Endothelial cell of umbilical vein (primary cell): ENCODE measurements at regions of chr19 and their contacts with region 1.

Region 1: GRCh38 chr19:27966390-27966816 is 1246.5 kb downstream of the UQCRFS1 start:
- DNase-seq: no peak
- H3K4me3 ChIP-seq: no peak overlapping the region
- H3K27ac ChIP-seq: no peak overlapping the region
- H3K4me1 ChIP-seq: no peaks in the 10 kb centered on the region
- H3K27me3 ChIP-seq: no peaks in the 10 kb centered on the region
- CTCF ChIP-seq: peak; percentile 23 to 41
- POLR2A ChIP-seq: no peak

Region 2: DNA sequence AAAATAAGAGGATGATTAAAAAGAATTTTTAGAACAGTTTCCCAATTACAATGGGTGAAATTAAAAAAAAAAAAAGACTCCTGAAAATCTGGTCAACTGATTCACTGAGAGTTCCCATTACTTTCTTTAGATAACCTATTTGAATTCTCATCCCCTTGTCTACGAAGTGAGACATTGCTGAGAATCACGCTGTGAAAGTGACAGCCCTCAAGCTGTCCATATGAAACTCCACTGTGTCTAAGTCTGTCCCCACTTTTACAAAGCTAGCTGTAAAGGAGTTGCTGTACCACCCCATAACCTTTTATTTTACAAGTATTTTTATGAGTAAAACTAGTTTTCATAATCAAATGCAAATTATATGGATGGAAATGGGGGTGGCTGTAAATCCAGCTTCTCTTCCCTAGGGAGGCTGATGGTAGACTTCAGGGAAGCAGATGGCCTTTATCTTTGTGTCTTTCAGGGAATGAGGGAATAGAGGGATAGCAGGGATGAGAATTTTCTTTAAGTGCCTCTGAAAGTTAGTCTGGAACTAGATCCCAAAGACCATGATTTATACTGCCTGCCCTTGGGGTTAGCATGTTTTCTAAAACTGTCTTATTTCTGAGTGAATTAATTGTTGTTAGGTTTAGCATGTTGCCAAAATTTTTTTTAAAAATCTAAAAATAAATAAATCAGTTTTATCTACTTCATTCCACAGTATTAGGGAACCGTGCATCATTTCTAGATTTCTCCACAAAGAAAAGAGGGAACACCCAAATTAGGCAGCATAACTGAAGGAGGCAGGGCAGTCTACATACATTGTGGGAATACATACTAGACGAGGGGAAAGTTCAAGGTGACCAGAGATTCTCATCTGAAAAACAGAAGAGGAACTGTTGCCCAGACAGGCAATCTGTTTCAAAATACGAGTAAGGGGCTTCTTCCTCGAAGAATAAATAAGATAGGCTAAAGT is 27.5 kb after region 1 on chr19:
- CTCF ChIA-PET with region 1: no interaction called
- POLR2A ChIA-PET with region 1: no interaction called
- dilution Hi-C with region 1: no loop called
- intact Hi-C with region 1: no loop called
- DNase-seq: no peak
- H3K4me3 ChIP-seq: no peak overlapping the region
- H3K27ac ChIP-seq: no peak overlapping the region
- H3K4me1 ChIP-seq: no peaks in the 10 kb centered on the region
- H3K27me3 ChIP-seq: no peaks in the 10 kb centered on the region
- CTCF ChIP-seq: no peak
- POLR2A ChIP-seq: no peak

Region 3: DNA sequence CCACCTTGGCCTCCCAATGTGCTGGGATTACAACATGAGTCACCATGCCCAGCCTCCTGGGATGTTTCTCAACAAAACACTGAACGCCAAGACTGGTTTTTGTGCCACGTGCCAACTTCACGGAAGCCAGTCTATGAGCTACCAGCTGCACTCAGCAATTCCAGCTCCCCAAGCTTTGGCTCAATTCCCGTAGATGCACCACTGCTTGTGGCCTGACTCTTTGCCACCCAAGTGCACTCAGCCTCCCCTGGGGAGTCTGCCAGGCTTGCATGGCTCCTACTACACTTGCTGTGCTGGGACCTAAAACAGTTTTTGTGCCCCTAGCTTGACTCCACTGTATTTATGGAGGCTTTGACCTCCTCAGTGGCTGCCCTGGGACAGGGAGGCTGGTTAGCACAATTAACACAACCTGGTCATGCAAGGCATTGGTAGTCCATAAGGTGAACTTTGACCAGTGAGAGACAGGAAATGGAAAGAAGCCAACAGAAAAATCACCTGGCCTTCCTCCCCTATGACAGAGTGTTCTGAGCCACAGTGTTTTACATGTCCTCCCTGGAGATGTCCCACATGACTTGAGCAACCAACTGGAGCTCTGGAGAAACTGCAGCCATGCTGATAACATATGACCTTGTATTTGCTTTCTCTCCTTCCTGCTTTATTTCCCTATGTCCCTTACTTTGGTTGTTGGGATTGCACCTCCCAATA is 73.4 kb after region 1 on chr19:
- CTCF ChIA-PET with region 1: no interaction called
- POLR2A ChIA-PET with region 1: no interaction called
- dilution Hi-C with region 1: no loop called
- intact Hi-C with region 1: no loop called
- DNase-seq: no peak
- H3K4me3 ChIP-seq: no peak overlapping the region
- H3K27ac ChIP-seq: no peak overlapping the region
- H3K4me1 ChIP-seq: no peaks in the 10 kb centered on the region
- H3K27me3 ChIP-seq: no peaks in the 10 kb centered on the region
- CTCF ChIP-seq: no peak
- POLR2A ChIP-seq: no peak

Region 4: GRCh38 chr19:28710278-28710677 is 743.9 kb after region 1 on chr19:
- CTCF ChIA-PET with region 1: no interaction called
- POLR2A ChIA-PET with region 1: no interaction called
- dilution Hi-C with region 1: no loop called
- intact Hi-C with region 1: loop called (anchors 1 kb)
- DNase-seq: peak; percentile 54
- H3K4me3 ChIP-seq: no peak overlapping the region
- H3K27ac ChIP-seq: no peak overlapping the region
- H3K4me1 ChIP-seq: no peaks in the 10 kb centered on the region
- H3K27me3 ChIP-seq: no peaks in the 10 kb centered on the region
- CTCF ChIP-seq: peak; percentile 32 to 44
- POLR2A ChIP-seq: no peak

Region 5: DNA sequence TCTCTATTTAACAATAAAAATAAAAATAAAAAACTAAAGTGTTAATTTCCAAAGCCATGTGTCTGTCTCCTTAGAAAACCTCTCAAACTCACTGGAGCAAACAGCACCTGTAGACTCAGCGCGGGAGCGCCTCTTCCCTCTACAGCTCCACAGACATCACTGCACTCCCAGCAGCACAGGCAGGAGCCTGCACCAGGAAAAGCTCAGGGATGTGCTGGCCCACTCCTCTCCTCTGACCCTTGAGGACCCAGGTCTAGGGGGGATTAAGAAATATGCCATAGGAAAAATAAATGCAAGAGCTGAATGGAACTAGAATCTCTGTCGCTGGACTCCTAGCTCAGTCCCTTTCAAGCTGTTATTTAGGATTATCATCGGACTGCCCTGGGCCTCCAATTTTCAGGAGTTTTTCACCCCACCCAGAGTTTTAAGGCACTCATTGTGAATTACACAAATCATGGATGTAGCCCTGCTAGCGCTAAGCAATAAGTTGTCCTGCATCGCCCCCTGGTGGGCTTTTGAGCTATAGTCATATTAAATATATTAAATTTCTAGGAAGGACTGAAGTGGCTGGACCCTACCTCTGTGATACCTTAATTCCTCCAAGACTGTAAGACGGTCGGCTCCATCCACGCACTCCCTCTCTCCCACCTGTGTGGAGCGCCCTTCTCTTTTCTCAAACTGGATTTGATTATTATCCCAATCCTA is 912.6 kb after region 1 on chr19:
- CTCF ChIA-PET with region 1: interaction called, 6 read pairs
- POLR2A ChIA-PET with region 1: no interaction called
- dilution Hi-C with region 1: no loop called
- intact Hi-C with region 1: loop called (anchors 2 kb)
- DNase-seq: peak; percentile 20
- H3K4me3 ChIP-seq: no peak overlapping the region
- H3K27ac ChIP-seq: no peak overlapping the region
- H3K4me1 ChIP-seq: no peaks in the 10 kb centered on the region
- H3K27me3 ChIP-seq: no peaks in the 10 kb centered on the region
- CTCF ChIP-seq: peak; percentile 45 to 47
- POLR2A ChIP-seq: no peak